ENCODE measurements at regions of chrX and their contacts with region 1.

Region 1: GRCh38 chrX:132615391-132616131 is 126.7 kb upstream of the MBNL3 start:
- DNase-seq: peak; percentile 62
- ATAC-seq: peak; percentile 60
- H3K4me3 Mint-ChIP-seq: no peak overlapping the region
- H3K27ac Mint-ChIP-seq: no peak overlapping the region
- H3K4me1 Mint-ChIP-seq: no peaks in the 10 kb centered on the region
- H3K27me3 Mint-ChIP-seq: no peaks in the 10 kb centered on the region
- CTCF ChIP-seq: peak; percentile 49

Region 2: DNA sequence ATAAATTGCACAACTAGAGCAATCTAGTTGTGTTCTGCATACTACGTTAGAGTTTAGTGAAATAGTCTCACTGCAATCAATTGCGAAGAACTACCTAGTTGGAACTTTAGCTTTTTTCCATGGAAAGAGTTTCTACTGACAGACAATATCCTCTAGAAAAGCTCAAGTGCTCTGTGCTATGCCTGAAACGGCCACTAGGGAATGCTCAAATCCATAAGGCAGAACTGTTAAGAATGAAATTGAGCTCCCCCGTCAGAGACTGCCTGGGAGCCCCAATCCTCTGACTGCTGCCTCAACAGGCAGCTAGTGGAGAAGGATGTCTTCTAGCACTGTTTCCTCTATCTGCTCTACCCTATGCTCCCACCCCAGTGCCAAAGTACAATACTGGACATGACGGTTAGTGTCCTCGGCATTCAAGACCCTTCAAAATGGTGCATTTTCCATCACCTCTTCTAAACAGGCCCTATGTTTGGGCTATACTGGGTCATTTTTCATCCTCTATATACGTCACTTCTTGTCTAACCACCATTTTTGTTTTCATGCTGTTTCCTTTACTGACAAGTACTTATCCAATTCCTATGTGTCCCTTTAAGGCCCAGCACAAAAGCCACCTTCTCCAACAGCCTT is 523.0 kb before region 1 on chrX:
- CTCF ChIA-PET with region 1: interaction called, 8 read pairs
- POLR2A ChIA-PET with region 1: no interaction called
- intact Hi-C with region 1: loop called (anchors 10 kb)
- DNase-seq: peak; percentile 74
- ATAC-seq: peak; percentile 94
- H3K4me3 Mint-ChIP-seq: no peak overlapping the region
- H3K27ac Mint-ChIP-seq: no peak overlapping the region
- H3K4me1 Mint-ChIP-seq: peaks cover 6% of the 10 kb centered on the region
- H3K27me3 Mint-ChIP-seq: no peaks in the 10 kb centered on the region
- CTCF ChIP-seq: peak; percentile 69

Region 3: GRCh38 chrX:132226169-132226568 is 389.4 kb before region 1 on chrX:
- CTCF ChIA-PET with region 1: interaction called, 13 read pairs
- POLR2A ChIA-PET with region 1: no interaction called
- intact Hi-C with region 1: loop called (anchors 2 kb)
- DNase-seq: no peak
- ATAC-seq: no peak
- H3K4me3 Mint-ChIP-seq: no peak overlapping the region
- H3K27ac Mint-ChIP-seq: no peak overlapping the region
- H3K4me1 Mint-ChIP-seq: peaks cover 9% of the 10 kb centered on the region
- H3K27me3 Mint-ChIP-seq: no peaks in the 10 kb centered on the region
- CTCF ChIP-seq: peak; percentile 40

Region 4: DNA sequence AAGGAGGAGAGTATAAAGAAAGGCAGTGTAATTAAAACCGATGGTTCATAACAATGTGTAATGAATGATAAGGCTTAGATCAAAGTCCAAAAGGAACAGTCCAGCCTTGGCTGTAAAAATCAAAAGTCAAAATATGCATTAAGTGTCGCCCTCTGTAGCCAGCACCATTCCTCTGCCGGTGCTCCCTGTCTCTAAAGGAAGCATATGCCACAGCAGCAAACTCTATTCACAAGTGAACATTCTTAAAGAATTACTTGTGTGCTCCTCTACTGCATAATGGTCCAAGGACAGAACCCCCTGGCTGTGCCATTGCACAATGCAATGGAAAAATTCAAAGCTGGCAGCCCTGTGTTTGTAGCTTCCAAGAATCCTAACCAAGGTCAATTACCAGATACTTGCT is 110.4 kb before region 1 on chrX:
- CTCF ChIA-PET with region 1: no interaction called
- POLR2A ChIA-PET with region 1: no interaction called
- intact Hi-C with region 1: no loop called
- DNase-seq: no peak
- ATAC-seq: no peak
- H3K4me3 Mint-ChIP-seq: no peak overlapping the region
- H3K27ac Mint-ChIP-seq: no peak overlapping the region
- H3K4me1 Mint-ChIP-seq: no peaks in the 10 kb centered on the region
- H3K27me3 Mint-ChIP-seq: no peaks in the 10 kb centered on the region
- CTCF ChIP-seq: no peak

Region 5: DNA sequence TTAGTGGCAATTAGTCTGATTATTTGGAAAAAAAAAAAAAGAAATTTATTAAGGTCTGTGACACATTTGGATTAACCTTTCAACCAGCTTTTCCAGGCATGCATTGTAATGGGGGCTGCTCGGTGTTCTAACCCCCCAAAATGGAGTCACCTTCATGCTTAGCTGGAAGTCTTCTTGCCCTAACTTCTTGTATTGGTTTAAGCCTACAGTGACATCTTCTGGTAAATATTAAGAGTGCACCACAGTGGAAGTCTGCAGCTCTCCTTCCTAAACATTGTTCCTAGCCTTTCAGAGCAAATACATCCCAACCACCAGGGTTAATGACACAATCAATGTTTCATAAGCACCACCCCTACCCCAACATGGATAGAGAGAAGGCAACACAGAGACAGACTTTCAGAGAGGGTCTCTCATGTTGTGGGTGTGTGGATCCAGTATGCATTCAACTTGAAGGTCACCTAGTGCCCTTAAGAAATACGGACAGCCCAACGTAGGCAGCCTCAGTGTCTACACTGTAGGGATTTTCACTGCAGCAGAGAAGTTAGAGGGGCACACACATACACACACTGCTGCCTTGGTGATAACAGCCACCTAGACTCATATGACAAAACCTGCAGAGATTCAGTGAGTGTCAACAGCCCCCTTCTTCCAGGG is 16.1 kb after region 1 on chrX:
- CTCF ChIA-PET with region 1: interaction called, 17 read pairs
- POLR2A ChIA-PET with region 1: no interaction called
- intact Hi-C with region 1: no loop called
- DNase-seq: no peak
- ATAC-seq: peak; percentile 66
- H3K4me3 Mint-ChIP-seq: no peak overlapping the region
- H3K27ac Mint-ChIP-seq: no peak overlapping the region
- H3K4me1 Mint-ChIP-seq: no peaks in the 10 kb centered on the region
- H3K27me3 Mint-ChIP-seq: no peaks in the 10 kb centered on the region
- CTCF ChIP-seq: peak; percentile 35

Measured in activated CD8-positive, alpha-beta T cell treated with anti-CD3 and anti-CD28 coated beads for 36 hours (primary cell).